PC-3 (cell line): ENCODE measurements at regions of chr9 and their contacts with region 1.

Region 1: DNA sequence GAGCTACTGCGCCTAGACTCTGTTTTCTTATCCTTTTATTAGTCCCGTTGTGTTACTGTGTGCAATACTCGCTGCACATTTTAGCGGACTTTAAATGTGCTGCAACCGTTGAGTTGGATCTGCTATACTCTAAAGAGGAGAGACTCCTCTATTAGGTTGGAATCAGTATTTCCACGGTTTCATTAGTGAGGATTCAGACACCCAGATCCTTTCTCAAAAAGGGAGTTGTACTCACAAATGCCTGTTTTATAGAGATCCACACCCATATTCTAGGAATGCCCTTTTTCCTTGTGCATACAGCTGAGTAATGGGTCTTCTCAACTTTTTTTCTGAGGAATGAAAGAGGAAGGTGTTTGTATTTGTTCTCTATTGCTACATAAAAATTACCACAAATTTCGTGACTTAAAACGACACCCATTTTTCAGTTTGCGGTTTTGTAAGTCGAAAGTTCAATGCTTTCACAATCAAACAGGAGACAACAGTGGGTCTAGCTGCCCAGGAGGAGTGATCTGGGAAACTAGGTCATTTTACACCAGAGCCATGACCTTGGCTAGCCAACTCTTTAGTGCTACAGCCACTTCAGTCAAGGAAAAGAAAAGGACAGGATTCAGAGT is 52.8 kb upstream of the SLC44A1 start:
- DNase-seq: peak; percentile 87
- ATAC-seq: peak; percentile 82
- H3K4me3 ChIP-seq: peak overlapping the region; percentile 11; the same call in 1 of the 2 replicates
- H3K27ac ChIP-seq: peak overlapping the region; percentile 92
- H3K4me1 ChIP-seq: peaks cover 29% of the 10 kb centered on the region
- H3K27me3 ChIP-seq: no peaks in the 10 kb centered on the region
- CTCF ChIP-seq: no peak

Region 2: GRCh38 chr9:105244003-105244733 is 52.6 kb after region 1 on chr9 and contains the start of gene SLC44A1:
- CTCF ChIA-PET with region 1: no interaction called
- POLR2A ChIA-PET with region 1: no interaction called
- intact Hi-C with region 1: loop called (anchors 2 kb)
- DNase-seq: peak; percentile 90
- ATAC-seq: peak; percentile 92
- H3K4me3 ChIP-seq: peak within 1 kb of the TSS; percentile 87
- H3K27ac ChIP-seq: peak within 1 kb of the TSS; percentile 48
- H3K4me1 ChIP-seq: peaks cover 11% of the 10 kb centered on the region
- H3K27me3 ChIP-seq: no peaks in the 10 kb centered on the region
- CTCF ChIP-seq: no peak
- total RNA-seq, gene SLC44A1: 15.3 and 16.1 TPM in 2 replicates